Activated T-helper 1 cell treated with anti-CD3 and anti-CD28 coated beads, Interleukin-12 subunit alpha, Interleukin-12 subunit beta, Interleukin-2, Interleukin-4 antibody, amounts not matched to agents 30 ng/mL and 10 ng/mL and 1 ng/mL, durations not matched to agents 14 hours and 24 hours and 36 hours (primary cell): ENCODE measurements at regions of chr20 and their contacts with region 1.

Region 1: DNA sequence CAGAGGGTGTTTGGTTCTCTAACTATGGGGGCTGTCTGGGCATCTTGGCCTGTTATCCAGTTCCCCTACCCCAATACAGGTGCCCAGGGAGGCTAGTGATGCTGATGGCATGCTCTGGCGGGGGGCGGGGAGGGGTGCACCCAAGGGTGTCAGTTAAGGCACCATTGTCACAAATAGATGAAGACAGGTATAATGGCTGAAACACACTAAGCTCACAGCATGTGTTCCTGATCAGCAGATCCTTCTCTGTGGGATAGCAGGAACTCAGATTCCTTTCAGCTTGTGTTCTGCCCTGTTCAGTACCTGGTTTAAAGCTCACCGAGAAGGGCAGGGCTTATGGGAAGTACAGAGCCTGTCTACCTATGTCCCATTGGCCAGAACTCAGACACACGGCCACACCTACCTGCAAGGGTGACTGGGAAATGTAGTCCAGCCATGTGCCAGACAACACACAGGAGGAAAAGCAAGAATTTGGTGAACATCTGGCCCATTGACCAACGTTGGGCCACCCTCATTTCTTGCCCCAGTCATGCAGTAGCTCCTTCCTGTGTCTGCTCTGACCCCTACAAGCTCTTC is 3.4 kb upstream of the RSPO4 start:
- DNase-seq: no peak
- H3K4me3 Mint-ChIP-seq: no peak overlapping the region
- H3K27ac Mint-ChIP-seq: no peak overlapping the region
- H3K4me1 Mint-ChIP-seq: no peaks in the 10 kb centered on the region
- H3K27me3 Mint-ChIP-seq: peaks cover 26% of the 10 kb centered on the region

Region 2: DNA sequence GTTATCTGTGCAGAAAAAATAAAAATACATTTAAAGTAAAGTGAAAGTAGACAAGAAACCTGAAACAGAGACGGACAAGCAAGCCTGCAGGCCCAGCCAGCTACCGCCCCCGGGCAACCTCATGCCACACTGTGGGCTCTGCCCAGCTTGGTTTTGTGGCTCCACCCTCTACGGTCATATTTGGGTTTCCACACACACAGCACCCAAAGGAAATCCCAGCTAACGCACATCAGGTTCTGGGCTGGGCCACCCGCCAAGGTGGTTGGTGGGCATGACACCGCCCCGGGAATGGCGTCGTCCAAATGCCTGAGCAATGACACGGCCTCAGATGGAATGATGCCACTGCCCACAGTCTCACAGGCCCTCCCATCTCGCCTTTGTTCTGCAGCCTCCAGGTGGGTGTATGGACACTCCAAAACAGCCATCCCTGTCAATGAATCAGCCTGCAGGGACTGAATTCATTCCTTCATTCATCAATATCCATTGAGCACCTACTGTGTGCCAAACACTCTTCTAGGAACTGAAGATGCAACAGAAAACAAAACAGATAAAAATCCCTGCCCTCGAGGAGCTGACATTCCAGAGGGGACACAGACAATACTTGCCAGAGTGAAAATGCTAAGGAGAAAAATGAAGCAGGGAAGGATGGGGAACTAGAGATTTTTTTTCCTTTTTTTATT is 149.0 kb before region 1 on chr20:
- intact Hi-C with region 1: no loop called
- DNase-seq: no peak
- H3K4me3 Mint-ChIP-seq: peak overlapping the region; percentile 43
- H3K27ac Mint-ChIP-seq: peak overlapping the region; percentile 35
- H3K4me1 Mint-ChIP-seq: peaks cover 81% of the 10 kb centered on the region
- H3K27me3 Mint-ChIP-seq: no peaks in the 10 kb centered on the region

Region 3: GRCh38 chr20:1108437-1108920 is 102.9 kb after region 1 on chr20:
- intact Hi-C with region 1: loop called (anchors 10 kb)
- DNase-seq: peak; percentile 25
- H3K4me3 Mint-ChIP-seq: no peak overlapping the region
- H3K27ac Mint-ChIP-seq: no peak overlapping the region
- H3K4me1 Mint-ChIP-seq: peaks cover 5% of the 10 kb centered on the region
- H3K27me3 Mint-ChIP-seq: peaks cover 5% of the 10 kb centered on the region